Activated CD4-positive, alpha-beta T cell treated with anti-CD3 and anti-CD28 coated beads for 36 hours (primary cell): ENCODE measurements at regions of chr6 and their contacts with region 1.

Region 1: DNA sequence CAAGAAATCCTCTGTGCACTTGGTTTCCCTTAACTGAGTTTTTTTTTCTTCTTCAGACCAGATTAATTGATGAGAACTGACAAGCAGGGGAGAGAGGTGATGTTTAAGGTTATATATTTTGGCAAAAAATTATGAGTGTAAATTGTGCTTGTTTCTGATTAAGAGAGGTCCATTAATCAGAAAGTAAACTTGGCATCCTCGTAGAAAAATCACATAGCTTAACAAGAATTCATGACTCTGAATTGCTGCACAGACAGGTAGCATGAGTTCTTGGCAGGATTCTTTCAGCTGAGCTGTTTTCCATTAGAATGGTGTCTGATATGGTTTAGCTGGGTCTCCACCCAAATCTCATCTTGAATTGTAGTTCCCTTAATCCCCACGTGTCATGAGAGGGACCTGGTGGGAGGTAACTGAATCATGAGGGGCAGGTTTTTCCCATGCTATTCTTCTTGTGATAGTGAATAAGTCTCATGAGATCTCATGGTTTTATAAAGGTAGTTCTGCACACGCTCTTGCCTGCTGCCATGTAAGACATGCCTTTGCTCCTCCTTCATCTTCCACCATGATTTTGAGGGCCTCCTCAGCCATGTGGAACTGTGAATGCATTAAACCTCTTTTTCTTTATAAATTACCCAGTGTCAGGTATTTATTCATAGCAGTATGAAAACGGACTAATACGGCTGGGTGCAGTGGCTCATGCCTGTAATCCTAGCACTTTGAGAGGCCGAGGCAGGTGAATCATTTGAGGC is 34.2 kb upstream of the DDR1 start:
- DNase-seq: no peak
- ATAC-seq: no peak
- H3K4me3 Mint-ChIP-seq: no peak overlapping the region
- H3K27ac Mint-ChIP-seq: no peak overlapping the region
- H3K4me1 Mint-ChIP-seq: no peaks in the 10 kb centered on the region
- H3K27me3 Mint-ChIP-seq: no peaks in the 10 kb centered on the region

Region 2: GRCh38 chr6:30862156-30862875 is 12.2 kb after region 1 on chr6:
- CTCF ChIA-PET with region 1: interaction called, 7 read pairs
- POLR2A ChIA-PET with region 1: no interaction called
- intact Hi-C with region 1: loop called in 1 of 2 experiments (anchors 2 kb)
- DNase-seq: no peak
- ATAC-seq: no peak
- H3K4me3 Mint-ChIP-seq: no peak overlapping the region
- H3K27ac Mint-ChIP-seq: no peak overlapping the region
- H3K4me1 Mint-ChIP-seq: peaks cover 13% of the 10 kb centered on the region
- H3K27me3 Mint-ChIP-seq: no peaks in the 10 kb centered on the region

Region 3: DNA sequence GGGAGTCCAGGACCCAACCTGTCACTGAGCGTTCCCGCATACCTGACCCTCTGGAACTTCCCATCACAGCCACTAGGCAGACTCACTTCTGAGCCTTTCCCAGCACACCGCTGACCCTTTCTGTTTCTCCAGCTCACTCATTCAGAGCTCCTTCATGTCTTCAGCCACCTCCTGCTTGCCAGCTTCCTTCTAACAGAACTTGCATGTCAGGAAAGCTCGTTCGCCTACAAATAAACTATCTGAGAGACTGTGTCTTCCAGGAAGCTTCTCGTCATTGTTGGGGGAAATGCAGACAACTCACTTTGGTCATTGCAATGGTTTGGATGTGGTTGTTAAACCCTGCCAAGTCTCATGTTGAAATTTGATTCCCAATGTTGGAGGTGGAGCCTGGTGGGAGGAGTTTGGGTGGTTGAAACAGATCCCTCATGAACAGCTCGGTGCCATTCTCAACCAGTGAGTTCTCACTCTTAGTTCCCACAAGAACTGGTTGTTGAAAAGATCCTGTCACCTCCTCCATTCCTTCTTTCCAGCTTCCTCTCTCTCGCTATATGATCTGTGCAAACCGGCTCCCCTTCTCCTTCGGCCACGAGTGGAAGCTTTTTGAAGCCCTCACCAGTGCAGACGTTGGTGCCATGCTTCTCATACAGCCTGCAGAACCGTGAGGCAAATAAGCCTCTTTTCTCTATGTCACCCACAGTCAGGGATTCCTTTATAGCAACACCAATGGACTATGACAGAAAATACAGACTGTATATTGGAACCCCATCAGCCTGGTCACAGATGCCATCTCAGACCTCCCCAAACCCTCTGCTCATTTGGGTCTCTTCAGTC is 132.1 kb after region 1 on chr6:
- CTCF ChIA-PET with region 1: no interaction called
- POLR2A ChIA-PET with region 1: no interaction called
- intact Hi-C with region 1: no loop called
- DNase-seq: no peak
- ATAC-seq: no peak
- H3K4me3 Mint-ChIP-seq: no peak overlapping the region
- H3K27ac Mint-ChIP-seq: no peak overlapping the region
- H3K4me1 Mint-ChIP-seq: peaks cover 6% of the 10 kb centered on the region
- H3K27me3 Mint-ChIP-seq: peaks cover 29% of the 10 kb centered on the region